Mammary epithelial cell (primary cell): ENCODE measurements at regions of chr14 and their contacts with region 1.

Region 1: DNA sequence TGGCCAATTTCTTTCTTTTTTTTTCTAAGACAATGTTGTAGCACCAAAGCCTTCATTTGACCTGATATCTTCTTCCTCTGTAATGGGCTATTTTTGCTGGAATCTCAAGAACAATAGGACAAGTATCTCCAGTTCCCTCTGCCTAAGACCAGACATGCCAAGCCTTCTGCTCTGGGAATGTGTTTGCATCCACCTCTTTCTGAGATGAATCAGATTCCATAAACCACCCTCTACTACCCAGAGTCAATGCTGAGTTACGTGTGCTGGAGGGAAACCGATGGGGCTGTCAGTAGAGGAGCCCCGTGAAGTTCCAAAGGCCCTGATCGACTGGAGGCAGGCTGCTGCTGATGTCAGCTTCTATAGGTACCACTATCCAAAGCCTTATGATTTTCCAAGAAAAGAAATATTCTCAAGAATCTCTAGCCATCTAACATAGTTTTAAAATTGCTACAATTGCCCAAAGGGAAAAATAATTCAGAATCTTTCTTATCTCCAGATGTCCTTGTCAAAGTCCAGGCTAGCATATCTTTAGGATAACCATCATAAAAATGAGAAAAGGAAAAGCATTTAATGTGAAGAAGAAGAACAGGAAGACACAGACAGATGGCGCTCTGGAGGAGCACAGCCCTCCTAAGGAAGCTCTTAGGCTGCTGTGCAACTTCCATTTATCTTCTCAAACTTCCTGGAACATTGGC is 101.9 kb downstream of the SLC8A3 start:
- DNase-seq: peak; percentile 13
- H3K4me3 ChIP-seq: no peak overlapping the region
- H3K27ac ChIP-seq: no peak overlapping the region
- H3K4me1 ChIP-seq: no peaks in the 10 kb centered on the region
- H3K27me3 ChIP-seq: peaks cover 3% of the 10 kb centered on the region
- CTCF ChIP-seq: peak; percentile 57 to 78

Region 2: GRCh38 chr14:70052990-70053389 is 33.8 kb before region 1 on chr14:
- CTCF ChIA-PET with region 1: no interaction called
- dilution Hi-C with region 1: no loop called
- in situ Hi-C with region 1: no loop called
- intact Hi-C with region 1: no loop called
- DNase-seq: peak; percentile 22
- H3K4me3 ChIP-seq: no peak overlapping the region
- H3K27ac ChIP-seq: no peak overlapping the region
- H3K4me1 ChIP-seq: no peaks in the 10 kb centered on the region
- H3K27me3 ChIP-seq: no peaks in the 10 kb centered on the region
- CTCF ChIP-seq: no peak

Region 3: DNA sequence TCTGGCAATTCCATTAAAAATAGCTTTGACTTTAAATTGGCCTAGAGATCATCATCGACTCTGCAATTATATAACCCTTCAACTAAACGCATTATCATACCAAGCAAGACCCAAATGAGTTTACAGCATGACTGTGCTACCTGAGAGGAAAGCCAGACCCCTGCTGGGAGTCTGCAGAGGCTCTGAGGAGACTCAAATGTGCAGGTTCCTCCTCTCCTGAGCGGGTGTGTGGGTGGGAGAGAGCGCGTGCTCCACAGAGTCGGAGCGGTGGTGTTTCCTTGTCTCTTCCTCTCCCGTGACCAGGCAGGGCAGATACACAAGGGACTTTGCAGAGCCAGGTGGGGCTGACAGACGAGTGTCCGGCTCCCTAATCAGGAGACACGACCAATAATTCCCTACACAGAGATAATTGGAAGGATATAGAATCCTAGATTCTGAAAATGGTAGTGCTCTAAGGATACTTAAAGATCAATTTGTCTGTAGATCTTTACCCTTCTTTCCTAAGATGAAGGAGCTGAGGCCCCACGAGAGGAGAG is 27.9 kb after region 1 on chr14:
- CTCF ChIA-PET with region 1: no interaction called
- dilution Hi-C with region 1: no loop called
- in situ Hi-C with region 1: no loop called
- intact Hi-C with region 1: no loop called
- DNase-seq: no peak
- H3K4me3 ChIP-seq: no peak overlapping the region
- H3K27ac ChIP-seq: no peak overlapping the region
- H3K4me1 ChIP-seq: no peaks in the 10 kb centered on the region
- H3K27me3 ChIP-seq: peaks cover 4% of the 10 kb centered on the region
- CTCF ChIP-seq: no peak

Region 4: DNA sequence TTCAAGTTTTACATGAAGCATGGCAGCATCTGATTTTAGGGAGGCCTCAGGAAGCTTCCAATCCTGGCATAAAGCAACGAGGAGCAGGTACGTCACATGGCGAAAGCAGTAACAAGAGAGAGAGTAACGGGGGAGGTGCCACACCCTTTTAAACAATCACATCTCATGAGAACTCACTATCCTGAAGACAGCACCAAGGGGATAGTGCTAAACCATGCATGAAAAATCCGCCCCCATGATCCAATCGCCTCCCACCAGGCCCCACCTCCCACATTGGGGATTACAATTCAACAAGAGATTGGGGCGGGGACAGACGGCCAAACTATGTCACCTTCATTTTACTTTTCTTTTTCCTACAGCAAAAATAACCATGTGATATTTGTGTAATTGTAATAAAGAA is 729.7 kb after region 1 on chr14:
- CTCF ChIA-PET with region 1: no interaction called
- dilution Hi-C with region 1: no loop called
- in situ Hi-C with region 1: no loop called
- intact Hi-C with region 1: loop called (anchors 5 kb)
- DNase-seq: no peak
- H3K4me3 ChIP-seq: no peak overlapping the region
- H3K27ac ChIP-seq: no peak overlapping the region
- H3K4me1 ChIP-seq: peaks cover 30% of the 10 kb centered on the region
- H3K27me3 ChIP-seq: no peaks in the 10 kb centered on the region
- CTCF ChIP-seq: no peak